Activated T-helper 2 cell treated with anti-CD3 and anti-CD28 coated beads, Interferon-gamma antibody, Interleukin-2, Interleukin-4, amounts not matched to agents 10 μg/mL and 5 μg/mL and 100 μg/mL, durations not matched to agents 14 hours and 24 hours and 36 hours (primary cell): ENCODE measurements at regions of chr17 and their contacts with region 1.

Region 1: DNA sequence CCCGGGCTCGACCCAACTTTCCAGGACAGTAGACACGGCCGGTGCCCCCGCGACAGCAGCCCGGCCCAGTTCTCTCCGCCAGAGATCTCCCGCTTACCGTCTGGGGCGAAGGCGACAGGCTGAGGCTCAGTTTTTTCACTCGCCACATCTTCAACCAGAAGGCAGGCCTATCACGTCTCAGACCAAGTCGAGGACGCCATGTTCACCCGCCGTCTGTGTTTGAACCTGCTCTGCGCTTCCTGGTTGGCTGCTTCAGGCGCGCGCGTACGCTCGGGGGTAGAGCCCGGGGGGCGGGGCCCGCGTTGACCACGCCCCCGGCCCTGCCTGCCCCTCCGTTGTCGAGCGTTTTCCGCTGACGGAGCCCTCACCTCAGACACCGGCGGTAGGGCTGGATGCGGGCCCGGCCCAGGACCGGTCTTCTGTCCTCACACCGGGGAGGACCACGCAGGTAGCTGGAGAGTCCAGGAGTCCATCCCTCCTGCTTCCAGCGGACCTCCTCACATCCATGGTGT is at the start of gene SPAG5:
- DNase-seq: peak; percentile 95
- H3K4me3 Mint-ChIP-seq: peak within 1 kb of the TSS; percentile 87
- H3K27ac Mint-ChIP-seq: peak within 1 kb of the TSS; percentile 98
- H3K4me1 Mint-ChIP-seq: peaks cover 17% of the 10 kb centered on the region
- H3K27me3 Mint-ChIP-seq: no peaks in the 10 kb centered on the region
- total RNA-seq, gene SPAG5: 92.5 and 98.8 TPM in 2 replicates

Region 2: DNA sequence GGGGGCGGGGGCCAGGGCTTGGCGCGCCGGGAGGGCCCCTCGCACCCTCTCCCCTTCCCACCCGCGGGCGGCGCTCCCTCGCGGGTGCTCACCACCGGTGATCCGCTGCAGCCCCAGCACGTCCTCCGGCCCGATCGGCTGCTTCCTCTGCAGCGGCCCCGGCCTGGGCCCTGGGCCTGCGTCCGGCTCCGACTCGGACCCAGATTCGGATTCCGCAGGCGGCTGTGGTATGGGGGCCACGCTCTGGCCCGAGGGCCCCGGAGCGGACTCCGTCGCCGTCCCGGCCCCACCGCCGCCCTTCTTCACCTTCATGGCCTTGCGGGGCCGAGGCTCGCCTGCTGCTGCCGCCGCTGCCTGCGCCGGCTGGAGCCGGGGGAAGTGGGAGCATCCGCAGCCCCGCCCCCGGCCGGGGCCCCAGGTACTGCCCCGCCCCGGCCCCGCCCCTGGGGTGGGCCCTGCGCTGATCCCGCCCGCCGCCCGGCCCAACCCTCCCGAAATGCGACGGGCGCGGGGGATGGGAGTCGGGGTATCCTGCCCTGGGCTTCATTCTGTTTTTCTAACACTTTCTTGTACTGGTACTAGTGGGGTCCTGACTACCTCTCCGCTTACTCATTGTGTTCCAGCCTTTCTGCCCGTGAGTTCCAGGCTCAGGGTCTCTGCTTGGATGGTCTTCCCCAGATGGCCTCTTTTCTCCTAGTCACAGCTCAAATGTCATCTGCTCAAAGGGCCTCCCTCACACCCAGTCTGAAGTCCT is 46.4 kb before region 1 on chr17 and contains the start of gene UNC119:
- intact Hi-C with region 1: loop called (anchors 2 kb)
- DNase-seq: peak; percentile 70
- H3K4me3 Mint-ChIP-seq: peak within 1 kb of the TSS; percentile 97
- H3K27ac Mint-ChIP-seq: peak within 1 kb of the TSS; percentile 76
- H3K4me1 Mint-ChIP-seq: peaks cover 47% of the 10 kb centered on the region
- H3K27me3 Mint-ChIP-seq: no peaks in the 10 kb centered on the region
- total RNA-seq, gene UNC119: 55.3 and 63.9 TPM in 2 replicates

Region 3: GRCh38 chr17:28571255-28572122 is 27.4 kb before region 1 on chr17 and contains the start of gene PIGS:
- intact Hi-C with region 1: loop called (anchors 1 kb)
- DNase-seq: peak; percentile 91
- H3K4me3 Mint-ChIP-seq: peak within 1 kb of the TSS; percentile 97
- H3K27ac Mint-ChIP-seq: peak within 1 kb of the TSS; percentile 93
- H3K4me1 Mint-ChIP-seq: peaks cover 54% of the 10 kb centered on the region
- H3K27me3 Mint-ChIP-seq: no peaks in the 10 kb centered on the region
- total RNA-seq, gene PIGS: 65.1 and 70.9 TPM in 2 replicates

Region 4: GRCh38 chr17:28576758-28577465 is 21.9 kb before region 1 on chr17 and contains the start of gene ALDOC:
- intact Hi-C with region 1: loop called (anchors 1 kb)
- DNase-seq: peak; percentile 97
- H3K4me3 Mint-ChIP-seq: peak within 1 kb of the TSS; percentile 91
- H3K27ac Mint-ChIP-seq: peak within 1 kb of the TSS; percentile 93
- H3K4me1 Mint-ChIP-seq: peaks cover 57% of the 10 kb centered on the region
- H3K27me3 Mint-ChIP-seq: no peaks in the 10 kb centered on the region
- total RNA-seq, gene ALDOC: 95.0 and 95.7 TPM in 2 replicates

Region 5: DNA sequence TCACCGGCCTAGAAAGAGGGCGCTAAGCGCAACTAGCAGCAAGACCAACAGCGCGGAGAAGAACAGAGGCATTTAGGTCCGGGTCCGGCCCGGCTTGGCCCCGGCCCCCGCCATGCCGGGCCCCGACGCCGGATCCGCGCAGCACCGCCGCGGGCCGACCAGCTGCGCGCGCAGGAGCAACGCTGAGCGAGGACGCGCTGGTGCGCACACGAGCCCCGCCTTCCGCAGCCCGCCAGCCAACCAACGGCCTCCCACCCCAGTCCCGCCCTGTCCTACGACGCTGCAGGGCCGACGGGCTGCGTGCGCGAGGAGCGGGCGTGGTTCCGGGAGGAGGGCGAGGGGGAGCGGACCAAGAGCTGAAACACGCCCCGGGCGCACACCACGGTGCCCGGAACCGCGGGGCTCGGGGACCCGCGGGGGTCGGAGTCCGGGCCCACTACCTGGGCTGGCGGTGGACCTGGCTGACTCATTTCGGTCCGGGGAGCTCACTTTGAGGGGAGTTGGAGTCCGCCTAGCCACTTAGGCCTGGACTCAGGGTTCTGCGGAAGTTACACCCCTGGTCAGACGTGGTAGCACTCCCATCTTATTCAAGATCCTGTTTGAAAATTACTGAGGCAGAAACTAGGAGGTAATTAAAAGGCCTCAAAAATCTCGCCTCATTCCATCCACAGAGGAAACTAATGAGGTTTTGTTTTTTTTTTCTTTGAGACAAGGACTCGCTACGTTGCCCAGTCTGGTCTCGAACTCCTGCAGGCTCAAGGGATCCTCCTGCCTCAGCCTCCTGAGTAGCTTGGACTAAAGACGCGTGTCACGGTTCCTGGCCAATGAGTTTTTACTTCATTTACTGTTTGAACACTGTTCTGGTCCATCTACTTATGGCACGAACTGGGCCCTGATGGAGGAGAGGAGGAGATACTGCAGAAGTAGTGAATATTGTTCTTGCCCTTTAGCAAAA is 46.4 kb after region 1 on chr17 and contains the start of gene BLTP2:
- intact Hi-C with region 1: loop called (anchors 2 kb)
- DNase-seq: peak; percentile 94
- H3K4me3 Mint-ChIP-seq: peak within 1 kb of the TSS; percentile 94
- H3K27ac Mint-ChIP-seq: peak within 1 kb of the TSS; percentile 86
- H3K4me1 Mint-ChIP-seq: peaks cover 35% of the 10 kb centered on the region
- H3K27me3 Mint-ChIP-seq: no peaks in the 10 kb centered on the region
- total RNA-seq, gene BLTP2: 196 and 213 TPM in 2 replicates